HepG2 (cell line): ENCODE measurements at regions of chr12 and their contacts with region 1.

Region 1: DNA sequence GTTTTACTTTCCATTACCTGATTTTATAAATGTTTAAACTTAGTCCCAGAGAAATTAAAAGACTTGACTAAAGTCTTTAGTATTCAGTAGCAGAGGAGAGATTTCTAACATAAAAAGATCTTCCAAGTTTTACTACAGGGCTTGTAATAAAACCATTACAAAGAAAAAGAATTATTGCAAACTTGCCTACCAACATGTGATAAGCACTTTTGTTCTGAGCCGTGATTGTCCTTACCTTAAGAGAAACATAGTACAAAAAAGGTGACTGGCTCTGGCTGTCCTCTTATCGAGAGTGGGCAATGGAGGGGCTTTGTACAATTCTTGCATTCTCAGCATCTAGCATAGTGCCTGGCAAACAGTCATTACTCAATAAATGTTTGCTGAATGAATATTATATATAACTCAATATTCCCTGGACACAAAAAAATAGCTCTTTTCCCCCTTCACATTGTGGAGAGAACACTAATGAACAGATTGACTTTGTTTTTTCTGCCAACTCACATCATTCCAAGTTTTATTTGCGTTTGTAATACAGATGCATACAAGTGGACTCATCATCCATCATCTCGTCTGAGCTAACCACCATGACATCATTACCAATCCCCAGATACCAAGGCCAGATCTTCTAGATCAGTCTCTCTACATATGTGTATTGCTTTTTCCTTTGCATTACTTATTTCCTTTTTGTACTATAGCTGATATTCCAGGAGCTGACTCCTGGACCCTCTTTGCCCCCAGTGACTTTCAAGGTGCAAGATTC is 192.8 kb upstream of the EEA1 start:
- DNase-seq: peak; percentile 64
- ATAC-seq: peak; percentile 60
- H3K4me3 ChIP-seq: peak overlapping the region; percentile 3 to 52 (median 17); a peak in 3 of 6 replicates
- H3K27ac ChIP-seq: peak overlapping the region; percentile 71
- H3K4me1 ChIP-seq: peaks cover 83% of the 10 kb centered on the region
- H3K27me3 ChIP-seq: no peaks in the 10 kb centered on the region
- CTCF ChIP-seq: no peak
- EP300 ChIP-seq: no peak
- POLR2A ChIP-seq: no peak
- RAD21 ChIP-seq: no peak

Region 2: DNA sequence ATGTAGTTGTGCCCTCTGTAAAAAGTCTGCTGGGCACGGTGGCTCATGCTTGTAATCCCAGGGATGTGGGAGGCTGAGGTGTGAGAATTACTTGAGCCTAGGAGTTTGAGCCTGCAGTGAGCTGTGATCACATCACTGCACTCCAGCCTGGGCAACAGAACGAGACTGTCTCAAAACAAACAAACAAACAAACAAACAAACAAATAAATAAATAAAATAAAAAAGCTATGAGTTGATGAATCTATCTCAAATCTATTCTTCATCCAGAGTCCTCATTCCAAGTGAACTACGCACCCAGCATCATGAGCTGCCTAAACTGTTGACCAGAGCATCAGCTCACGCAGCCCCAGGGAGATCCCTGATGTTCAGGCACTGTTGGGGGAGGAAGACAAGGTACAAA is 57.3 kb before region 1 on chr12:
- CTCF ChIA-PET with region 1: no interaction called
- POLR2A ChIA-PET with region 1: no interaction called
- in situ Hi-C with region 1: no loop called
- intact Hi-C with region 1: no loop called
- DNase-seq: no peak
- ATAC-seq: no peak
- H3K4me3 ChIP-seq: no peak overlapping the region
- H3K27ac ChIP-seq: no peak overlapping the region
- H3K4me1 ChIP-seq: peaks cover 17% of the 10 kb centered on the region
- H3K27me3 ChIP-seq: no peaks in the 10 kb centered on the region; a peak in 2 of 5 replicates
- CTCF ChIP-seq: no peak
- EP300 ChIP-seq: no peak
- POLR2A ChIP-seq: no peak
- RAD21 ChIP-seq: no peak

Region 3: GRCh38 chr12:93089805-93090569 is 31.9 kb before region 1 on chr12:
- CTCF ChIA-PET with region 1: no interaction called
- POLR2A ChIA-PET with region 1: interaction called, 17 read pairs
- in situ Hi-C with region 1: no loop called
- intact Hi-C with region 1: loop called (anchors 1 kb)
- DNase-seq: no peak
- ATAC-seq: no peak
- H3K4me3 ChIP-seq: no peak overlapping the region
- H3K27ac ChIP-seq: no peak overlapping the region
- H3K4me1 ChIP-seq: peaks cover 88% of the 10 kb centered on the region
- H3K27me3 ChIP-seq: no peaks in the 10 kb centered on the region
- CTCF ChIP-seq: no peak
- EP300 ChIP-seq: no peak
- POLR2A ChIP-seq: no peak
- RAD21 ChIP-seq: no peak

Region 4: DNA sequence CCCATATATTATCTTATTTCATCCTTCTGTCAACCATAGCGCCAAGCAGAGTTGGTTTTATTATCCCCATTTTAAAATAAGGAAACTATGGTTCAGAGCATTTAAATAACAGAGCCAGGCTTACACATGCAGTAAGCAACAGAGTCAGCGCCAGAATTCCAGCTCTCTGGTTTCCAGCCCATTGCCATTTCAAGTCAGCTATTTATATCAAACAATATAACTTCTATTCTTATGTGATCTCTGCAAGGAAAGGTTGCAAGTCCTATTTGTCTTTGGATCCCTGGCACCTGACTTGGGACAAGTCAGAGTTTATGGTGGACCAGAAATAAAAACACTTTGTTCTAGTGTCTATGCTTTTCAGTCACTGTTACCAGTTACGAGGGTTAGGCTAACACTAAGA is 18.8 kb before region 1 on chr12:
- CTCF ChIA-PET with region 1: interaction called, 8 read pairs
- POLR2A ChIA-PET with region 1: interaction called, 11 read pairs
- in situ Hi-C with region 1: no loop called
- intact Hi-C with region 1: loop called (anchors 1 kb)
- DNase-seq: no peak
- ATAC-seq: peak; percentile 18; the same call in 2 of the 3 replicates
- H3K4me3 ChIP-seq: no peak overlapping the region
- H3K27ac ChIP-seq: peak overlapping the region; percentile 91
- H3K4me1 ChIP-seq: peaks cover 83% of the 10 kb centered on the region
- H3K27me3 ChIP-seq: no peaks in the 10 kb centered on the region
- CTCF ChIP-seq: no peak
- EP300 ChIP-seq: no peak
- POLR2A ChIP-seq: no peak
- RAD21 ChIP-seq: no peak

Region 5: GRCh38 chr12:93137656-93138612 is 16.0 kb after region 1 on chr12:
- CTCF ChIA-PET with region 1: no interaction called
- POLR2A ChIA-PET with region 1: interaction called, 23 read pairs
- in situ Hi-C with region 1: no loop called
- intact Hi-C with region 1: loop called (anchors 1 kb)
- DNase-seq: no peak
- ATAC-seq: no peak
- H3K4me3 ChIP-seq: no peak overlapping the region
- H3K27ac ChIP-seq: no peak overlapping the region
- H3K4me1 ChIP-seq: peaks cover 90% of the 10 kb centered on the region
- H3K27me3 ChIP-seq: no peaks in the 10 kb centered on the region
- CTCF ChIP-seq: no peak
- EP300 ChIP-seq: no peak
- POLR2A ChIP-seq: no peak
- RAD21 ChIP-seq: no peak